ENCODE measurements at regions of chr4 and their contacts with region 1.

Region 1: GRCh38 chr4:51963841-51964517 is 56.2 kb downstream of the LRRC66 start:
- DNase-seq: no peak
- CTCF ChIP-seq: no peak

Region 2: DNA sequence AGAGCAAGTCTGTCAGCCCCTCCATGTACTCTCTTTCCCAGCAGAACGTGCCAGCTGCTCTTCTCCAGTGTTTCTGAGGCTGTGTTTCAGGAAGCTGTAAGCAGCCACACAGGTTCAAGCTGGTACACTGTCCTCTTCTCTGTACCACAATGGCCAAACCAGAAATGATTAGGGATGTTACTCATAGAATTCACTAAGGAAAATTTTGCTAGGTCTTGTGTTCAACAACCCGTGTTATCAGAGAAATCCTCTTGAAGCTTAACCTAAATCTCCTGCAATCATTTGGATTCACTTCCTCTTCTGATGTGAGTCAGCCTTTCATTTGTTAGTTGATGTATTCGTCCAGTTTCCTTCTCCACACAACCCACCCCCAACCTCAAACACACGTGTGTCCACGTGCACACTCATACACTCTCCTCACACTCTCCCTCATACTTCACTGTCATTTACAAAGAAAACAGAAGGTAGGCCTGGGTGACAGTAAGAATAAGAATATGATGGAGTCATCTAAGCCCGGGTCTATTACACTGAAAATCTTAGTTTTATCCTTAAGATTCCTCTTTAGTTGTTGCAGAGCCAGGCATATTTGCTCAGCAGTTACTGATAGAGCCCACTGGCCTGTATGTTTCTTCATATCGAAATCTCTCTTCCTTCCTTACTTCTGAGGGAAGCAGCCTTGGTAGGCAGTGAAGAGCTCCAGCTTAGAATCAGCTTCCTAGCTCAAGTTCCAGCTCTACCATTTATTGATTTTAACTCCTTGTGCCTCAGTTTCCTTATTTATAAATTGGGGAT is 57.6 kb before region 1 on chr4:
- in situ Hi-C with region 1: no loop called
- DNase-seq: peak; percentile 34
- CTCF ChIP-seq: no peak

Region 3: GRCh38 chr4:52103319-52103718 is 139.3 kb after region 1 on chr4:
- in situ Hi-C with region 1: loop called (anchors 25 kb)
- DNase-seq: no peak
- CTCF ChIP-seq: no peak